CD8-positive, alpha-beta T cell (primary cell): ENCODE measurements at regions of chr11 and their contacts with region 1.

Region 1: GRCh38 chr11:15045891-15046290 is 27.5 kb upstream of the CALCB start:
- DNase-seq: no peak
- ATAC-seq: no peak
- H3K4me3 ChIP-seq: no peak overlapping the region
- H3K4me3 Mint-ChIP-seq: no peak overlapping the region
- H3K27ac ChIP-seq: no peak overlapping the region
- H3K27ac Mint-ChIP-seq: no peak overlapping the region
- H3K4me1 ChIP-seq: no peaks in the 10 kb centered on the region
- H3K4me1 Mint-ChIP-seq: no peaks in the 10 kb centered on the region
- H3K27me3 ChIP-seq: no peaks in the 10 kb centered on the region
- H3K27me3 Mint-ChIP-seq: peaks cover 13% of the 10 kb centered on the region
- CTCF ChIP-seq: no peak

Region 2: DNA sequence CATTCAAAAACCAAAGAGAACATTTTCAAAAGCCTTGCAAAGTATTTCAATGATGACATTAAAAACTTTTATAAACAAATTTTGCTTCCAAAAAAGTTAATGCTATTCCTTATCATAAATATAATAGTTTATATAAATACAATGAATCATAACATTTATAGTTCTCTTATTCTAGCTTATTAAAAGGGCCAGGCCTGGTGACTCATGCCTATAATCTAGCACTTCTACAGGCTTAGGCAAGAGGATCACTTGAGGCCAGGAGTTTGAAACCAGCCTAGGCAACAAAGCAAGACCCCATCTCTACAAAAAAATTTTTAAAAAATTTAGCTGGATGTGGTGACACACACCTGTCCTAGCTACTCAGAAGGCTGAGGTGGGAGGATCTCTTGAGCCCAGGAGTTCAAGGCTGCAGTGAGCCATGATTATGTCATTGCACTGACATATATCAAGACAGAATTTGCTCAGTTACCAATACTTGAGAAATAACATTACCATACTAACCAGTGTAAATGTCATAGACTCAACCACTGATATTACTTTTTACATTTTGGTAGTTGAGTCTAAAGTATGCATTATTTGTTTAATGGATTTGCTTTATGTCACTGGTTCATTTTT is 210.3 kb before region 1 on chr11:
- CTCF ChIA-PET with region 1: no interaction called
- POLR2A ChIA-PET with region 1: no interaction called
- intact Hi-C with region 1: no loop called
- DNase-seq: no peak
- ATAC-seq: no peak
- H3K4me3 ChIP-seq: no peak overlapping the region
- H3K4me3 Mint-ChIP-seq: no peak overlapping the region
- H3K27ac ChIP-seq: no peak overlapping the region
- H3K27ac Mint-ChIP-seq: no peak overlapping the region
- H3K4me1 ChIP-seq: no peaks in the 10 kb centered on the region
- H3K4me1 Mint-ChIP-seq: no peaks in the 10 kb centered on the region
- H3K27me3 ChIP-seq: no peaks in the 10 kb centered on the region
- H3K27me3 Mint-ChIP-seq: no peaks in the 10 kb centered on the region
- CTCF ChIP-seq: no peak

Region 3: GRCh38 chr11:15006139-15006759 is 39.6 kb before region 1 on chr11:
- CTCF ChIA-PET with region 1: no interaction called
- POLR2A ChIA-PET with region 1: no interaction called
- intact Hi-C with region 1: no loop called
- DNase-seq: peak in 3 of 9 experiments; percentile 13 to 61 (median 50)
- ATAC-seq: peak; percentile 34
- H3K4me3 ChIP-seq: no peak overlapping the region
- H3K4me3 Mint-ChIP-seq: no peak overlapping the region
- H3K27ac ChIP-seq: no peak overlapping the region
- H3K27ac Mint-ChIP-seq: no peak overlapping the region
- H3K4me1 ChIP-seq: no peaks in the 10 kb centered on the region
- H3K4me1 Mint-ChIP-seq: no peaks in the 10 kb centered on the region
- H3K27me3 ChIP-seq: no peaks in the 10 kb centered on the region
- H3K27me3 Mint-ChIP-seq: peaks cover 34% of the 10 kb centered on the region
- CTCF ChIP-seq: peak; percentile 56

Region 4: GRCh38 chr11:15027011-15027410 is 18.9 kb before region 1 on chr11:
- CTCF ChIA-PET with region 1: interaction called, 4 read pairs
- POLR2A ChIA-PET with region 1: no interaction called
- intact Hi-C with region 1: loop called in 1 of 2 experiments (anchors 1 kb)
- DNase-seq: no peak
- ATAC-seq: no peak
- H3K4me3 ChIP-seq: no peak overlapping the region
- H3K4me3 Mint-ChIP-seq: no peak overlapping the region
- H3K27ac ChIP-seq: no peak overlapping the region
- H3K27ac Mint-ChIP-seq: no peak overlapping the region
- H3K4me1 ChIP-seq: no peaks in the 10 kb centered on the region
- H3K4me1 Mint-ChIP-seq: no peaks in the 10 kb centered on the region
- H3K27me3 ChIP-seq: no peaks in the 10 kb centered on the region
- H3K27me3 Mint-ChIP-seq: peaks cover 18% of the 10 kb centered on the region
- CTCF ChIP-seq: no peak

Region 5: GRCh38 chr11:15093432-15093831 is 47.5 kb after region 1 on chr11:
- CTCF ChIA-PET with region 1: no interaction called
- POLR2A ChIA-PET with region 1: no interaction called
- intact Hi-C with region 1: no loop called
- DNase-seq: no peak
- ATAC-seq: no peak
- H3K4me3 ChIP-seq: no peak overlapping the region
- H3K4me3 Mint-ChIP-seq: no peak overlapping the region
- H3K27ac ChIP-seq: no peak overlapping the region
- H3K27ac Mint-ChIP-seq: no peak overlapping the region
- H3K4me1 ChIP-seq: no peaks in the 10 kb centered on the region
- H3K4me1 Mint-ChIP-seq: no peaks in the 10 kb centered on the region
- H3K27me3 ChIP-seq: peaks cover 0 to 4% of the 10 kb centered on the region in 2 experiments
- H3K27me3 Mint-ChIP-seq: peaks cover 17% of the 10 kb centered on the region
- CTCF ChIP-seq: no peak

Region 6: GRCh38 chr11:15248749-15249148 is 202.9 kb after region 1 on chr11:
- CTCF ChIA-PET with region 1: no interaction called
- POLR2A ChIA-PET with region 1: no interaction called
- intact Hi-C with region 1: no loop called
- DNase-seq: no peak
- ATAC-seq: no peak
- H3K4me3 ChIP-seq: no peak overlapping the region
- H3K4me3 Mint-ChIP-seq: no peak overlapping the region
- H3K27ac ChIP-seq: no peak overlapping the region
- H3K27ac Mint-ChIP-seq: no peak overlapping the region
- H3K4me1 ChIP-seq: no peaks in the 10 kb centered on the region
- H3K4me1 Mint-ChIP-seq: no peaks in the 10 kb centered on the region
- H3K27me3 ChIP-seq: no peaks in the 10 kb centered on the region
- H3K27me3 Mint-ChIP-seq: peaks cover 13% of the 10 kb centered on the region
- CTCF ChIP-seq: no peak